ENCODE measurements at regions of chr7 and their contacts with region 1.

Region 1: DNA sequence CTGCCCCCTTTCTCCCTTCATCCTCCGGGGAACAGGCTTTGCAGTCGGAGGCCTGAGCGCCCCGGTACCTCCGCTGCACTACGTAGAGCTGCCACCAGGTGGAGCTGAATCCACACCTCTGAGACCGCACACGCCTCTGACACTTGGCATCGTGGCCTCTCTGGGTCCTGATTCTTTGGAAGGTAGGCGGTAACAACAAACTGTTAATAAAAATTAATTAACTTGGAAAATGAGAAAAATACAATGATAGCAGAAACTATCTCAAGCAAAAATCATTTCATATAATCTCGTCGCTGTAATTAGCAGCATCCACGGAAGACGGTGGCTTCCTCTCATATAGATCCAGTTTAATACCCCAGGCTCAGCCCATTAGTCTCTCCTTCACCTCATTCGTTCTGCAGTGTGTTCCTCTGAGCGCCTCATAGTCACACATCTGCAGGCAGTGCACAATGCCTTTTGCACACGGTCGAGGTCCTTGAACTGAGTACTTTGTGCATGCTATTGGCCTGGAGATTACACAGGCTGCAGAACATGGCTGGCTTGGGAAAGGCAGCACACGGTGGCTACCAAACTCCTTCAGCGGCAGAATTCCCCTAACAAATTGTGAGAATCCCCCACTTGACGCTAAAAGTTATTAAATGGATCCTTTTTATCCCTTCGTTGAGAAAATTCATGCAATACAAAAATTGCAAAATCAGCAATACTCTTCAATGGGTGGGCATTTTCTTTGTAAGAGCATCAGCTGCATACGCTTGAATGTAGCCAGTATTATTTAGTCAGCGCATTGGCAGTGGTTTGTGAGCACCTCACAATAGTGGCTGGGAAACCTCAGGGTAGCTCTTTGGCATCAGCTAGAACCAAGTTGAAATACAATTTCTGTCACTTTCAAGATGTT is 18.7 kb downstream of the OR9A2 start:
- DNase-seq: peak; percentile 69 to 80 (median 76)
- H3K4me3 ChIP-seq: no peak overlapping the region
- H3K4me3 Mint-ChIP-seq: peak overlapping the region in 1 of 8 donors; percentile 15
- H3K27ac ChIP-seq: no peak overlapping the region
- H3K27ac Mint-ChIP-seq: peak overlapping the region in 2 of 7 donors; percentile 5 to 65
- H3K4me1 ChIP-seq: peaks cover 3% of the 10 kb centered on the region
- H3K4me1 Mint-ChIP-seq: peaks cover 4 to 6% (median 6%) of the 10 kb centered on the region in 4 donors
- H3K27me3 ChIP-seq: no peaks in the 10 kb centered on the region
- H3K27me3 Mint-ChIP-seq: peaks cover 6 to 7% of the 10 kb centered on the region in 2 donors

Region 2: GRCh38 chr7:142323706-142324105 is 684.5 kb before region 1 on chr7:
- CTCF ChIA-PET with region 1: interaction called, 6 read pairs
- POLR2A ChIA-PET with region 1: interaction called, 5 read pairs
- intact Hi-C with region 1: loop called (anchors 1 kb)
- DNase-seq: peak in 2 of 5 donors; percentile 31 to 37
- H3K4me3 ChIP-seq: no peak overlapping the region
- H3K4me3 Mint-ChIP-seq: peak overlapping the region in 4 of 8 donors; percentile 6 to 69 (median 18)
- H3K27ac ChIP-seq: no peak overlapping the region
- H3K27ac Mint-ChIP-seq: peak overlapping the region; percentile 56 to 91 (median 71)
- H3K4me1 ChIP-seq: peaks cover 25% of the 10 kb centered on the region
- H3K4me1 Mint-ChIP-seq: peaks cover 13 to 34% (median 19%) of the 10 kb centered on the region in 4 donors
- H3K27me3 ChIP-seq: no peaks in the 10 kb centered on the region
- H3K27me3 Mint-ChIP-seq: peaks cover 0 to 3% of the 10 kb centered on the region in 2 donors

Region 3: DNA sequence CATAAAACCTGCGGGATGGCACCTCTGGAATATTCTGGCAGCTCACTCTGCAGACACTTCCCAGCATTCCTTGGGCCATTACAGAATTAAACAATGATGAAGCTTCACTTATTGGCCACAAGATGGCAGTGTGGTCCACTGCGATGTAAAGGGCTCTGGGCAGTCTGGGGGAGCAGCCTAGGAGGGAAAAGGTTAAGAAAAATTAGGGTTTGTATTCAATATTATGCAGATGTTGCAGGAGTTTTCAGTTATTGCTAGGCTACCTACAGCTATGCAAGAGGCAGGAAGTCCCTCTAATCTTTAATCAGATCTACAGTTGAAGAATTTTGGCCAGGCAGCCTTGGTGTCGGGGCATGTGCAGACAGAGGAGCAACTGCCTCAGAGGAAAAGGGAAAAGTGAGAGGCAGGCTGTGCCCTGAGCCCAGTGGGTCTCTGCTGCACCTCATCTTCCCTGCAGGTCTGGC is 492.2 kb before region 1 on chr7:
- CTCF ChIA-PET with region 1: interaction called, 4 read pairs
- POLR2A ChIA-PET with region 1: no interaction called
- intact Hi-C with region 1: loop called (anchors 5 kb)
- DNase-seq: peak in 4 of 5 donors; percentile 33 to 46 (median 44)
- H3K4me3 ChIP-seq: no peak overlapping the region
- H3K4me3 Mint-ChIP-seq: peak overlapping the region in 4 of 8 donors; percentile 18 to 75 (median 30)
- H3K27ac ChIP-seq: no peak overlapping the region
- H3K27ac Mint-ChIP-seq: peak overlapping the region in 3 of 7 donors; percentile 9 to 67 (median 57)
- H3K4me1 ChIP-seq: peaks cover 34% of the 10 kb centered on the region
- H3K4me1 Mint-ChIP-seq: peaks cover 12 to 50% (median 29%) of the 10 kb centered on the region in 4 donors
- H3K27me3 ChIP-seq: no peaks in the 10 kb centered on the region
- H3K27me3 Mint-ChIP-seq: no peaks in the 10 kb centered on the region

Region 4: DNA sequence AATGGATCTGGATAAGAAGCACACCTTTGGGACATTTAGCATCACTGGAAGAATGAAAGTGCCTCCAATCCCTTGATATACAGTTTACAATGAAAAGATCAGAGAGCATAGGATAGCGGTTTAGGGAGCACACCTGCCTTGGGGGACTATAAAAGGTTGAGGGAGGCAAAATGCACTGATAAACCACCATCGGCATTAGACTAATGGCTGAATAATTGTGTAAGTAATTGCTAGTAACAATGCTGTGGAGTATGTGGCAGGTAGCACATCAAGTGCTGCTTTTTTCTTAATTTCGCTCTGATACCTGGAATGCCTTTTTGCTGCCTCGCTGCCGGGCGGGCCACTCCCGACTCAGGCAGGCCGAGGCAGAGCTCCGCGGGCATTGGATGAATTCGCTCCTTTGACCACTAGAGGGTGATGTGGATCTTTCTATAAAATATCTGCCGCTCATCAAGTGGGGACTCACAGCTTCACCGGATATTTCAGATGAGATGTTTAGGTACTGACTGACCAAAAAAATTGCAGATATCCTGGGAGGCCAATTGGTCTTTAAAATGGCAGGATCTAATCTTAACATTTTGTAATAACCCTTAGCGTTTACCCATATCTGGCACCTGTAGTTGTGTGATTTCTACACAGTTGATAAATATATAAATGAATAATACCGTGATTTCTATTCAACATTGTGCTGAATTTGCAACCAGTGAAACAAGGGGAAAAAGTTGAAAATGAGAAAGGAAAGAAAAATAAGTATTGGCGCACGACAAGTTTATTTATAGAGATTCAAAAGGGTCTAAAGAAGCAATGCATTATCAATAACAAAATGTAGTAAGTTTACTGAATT is 375.7 kb before region 1 on chr7:
- CTCF ChIA-PET with region 1: interaction called, 8 read pairs
- POLR2A ChIA-PET with region 1: no interaction called
- intact Hi-C with region 1: loop called (anchors 1 kb)
- DNase-seq: peak; percentile 47 to 68 (median 67)
- H3K4me3 ChIP-seq: no peak overlapping the region
- H3K4me3 Mint-ChIP-seq: peak overlapping the region in 4 of 8 donors; percentile 15 to 51 (median 34)
- H3K27ac ChIP-seq: no peak overlapping the region
- H3K27ac Mint-ChIP-seq: peak overlapping the region in 4 of 7 donors; percentile 35 to 82 (median 72)
- H3K4me1 ChIP-seq: peaks cover 3% of the 10 kb centered on the region
- H3K4me1 Mint-ChIP-seq: peaks cover 3 to 15% (median 8%) of the 10 kb centered on the region in 4 donors
- H3K27me3 ChIP-seq: no peaks in the 10 kb centered on the region
- H3K27me3 Mint-ChIP-seq: peaks cover 1% of the 10 kb centered on the region in 2 donors

Region 5: GRCh38 chr7:142669074-142669654 is 339.1 kb before region 1 on chr7:
- CTCF ChIA-PET with region 1: no interaction called
- POLR2A ChIA-PET with region 1: no interaction called
- intact Hi-C with region 1: no loop called
- DNase-seq: peak in 4 of 5 donors; percentile 19 to 43 (median 30)
- H3K4me3 ChIP-seq: no peak overlapping the region
- H3K4me3 Mint-ChIP-seq: peak overlapping the region in 4 of 8 donors; percentile 0 to 67 (median 26)
- H3K27ac ChIP-seq: no peak overlapping the region
- H3K27ac Mint-ChIP-seq: peak overlapping the region in 5 of 7 donors; percentile 39 to 86 (median 70)
- H3K4me1 ChIP-seq: peaks cover 25% of the 10 kb centered on the region
- H3K4me1 Mint-ChIP-seq: peaks cover 19 to 30% (median 25%) of the 10 kb centered on the region in 4 donors
- H3K27me3 ChIP-seq: no peaks in the 10 kb centered on the region
- H3K27me3 Mint-ChIP-seq: no peaks in the 10 kb centered on the region

Region 6: DNA sequence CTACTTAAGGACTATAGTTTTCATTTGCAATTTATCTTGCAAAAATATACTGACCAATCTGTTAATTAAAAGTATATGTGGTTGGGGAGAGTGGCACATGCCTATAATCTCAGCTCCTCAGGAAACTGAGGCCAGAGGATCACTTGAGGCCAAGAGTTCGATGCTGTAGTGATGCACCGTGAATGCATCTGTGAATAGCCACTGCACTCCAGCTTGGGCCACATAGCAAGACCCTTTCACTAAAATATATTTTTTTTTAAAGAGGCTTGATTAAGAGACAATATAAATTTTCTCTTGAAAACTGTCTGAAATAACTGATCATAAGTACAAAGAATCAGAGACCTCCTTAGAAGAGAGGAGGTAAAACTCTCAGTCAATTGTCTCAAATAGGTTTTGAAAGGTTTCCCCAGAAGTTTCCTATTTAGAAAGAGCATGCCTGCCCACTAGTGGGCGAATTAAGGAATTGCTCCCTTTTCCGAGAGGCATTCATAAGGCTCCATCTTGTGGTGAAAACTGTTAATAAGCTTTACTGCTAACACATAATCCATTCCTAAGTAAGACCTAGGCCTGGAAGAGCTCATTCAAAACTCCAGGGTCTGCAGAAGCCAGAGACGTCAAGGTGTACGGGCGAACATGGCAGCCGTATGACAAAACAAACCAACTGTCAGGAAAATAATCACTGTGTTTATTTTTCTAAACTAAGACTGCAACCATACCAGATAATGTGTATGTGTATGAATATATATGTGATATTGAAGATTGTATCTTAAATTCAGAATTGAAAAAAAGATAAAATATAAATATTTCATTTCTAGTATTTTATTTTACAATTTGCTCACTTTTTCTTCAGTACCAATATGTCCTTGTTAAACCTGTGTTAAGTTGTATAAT is 206.8 kb after region 1 on chr7:
- CTCF ChIA-PET with region 1: interaction called, 291 read pairs
- POLR2A ChIA-PET with region 1: interaction called, 5 read pairs
- intact Hi-C with region 1: loop called (anchors 1 kb)
- DNase-seq: peak; percentile 67 to 79 (median 77)
- H3K4me3 ChIP-seq: no peak overlapping the region
- H3K4me3 Mint-ChIP-seq: no peak overlapping the region
- H3K27ac ChIP-seq: no peak overlapping the region
- H3K27ac Mint-ChIP-seq: no peak overlapping the region
- H3K4me1 ChIP-seq: no peaks in the 10 kb centered on the region
- H3K4me1 Mint-ChIP-seq: peaks cover 0 to 1% (median 0%) of the 10 kb centered on the region in 4 donors
- H3K27me3 ChIP-seq: no peaks in the 10 kb centered on the region
- H3K27me3 Mint-ChIP-seq: peaks cover 3% of the 10 kb centered on the region in 2 donors

Measured in CD4-positive, alpha-beta memory T cell (primary cell).